CD14-positive monocyte (primary cell): ENCODE measurements at regions of chr17 and their contacts with region 1.

Region 1: GRCh38 chr17:38868817-38869525 is 887 bp upstream of the LASP1 start:
- DNase-seq: peak; percentile 77 to 81 (median 80)
- H3K4me3 ChIP-seq: peak overlapping the region; percentile 98 to 100 (median 100)
- H3K4me3 Mint-ChIP-seq: peak overlapping the region; percentile 95 to 99
- H3K27ac ChIP-seq: peak overlapping the region; percentile 79 to 89
- H3K27ac Mint-ChIP-seq: peak overlapping the region; percentile 92 to 97 (median 95)
- H3K4me1 ChIP-seq: peaks cover 44 to 60% of the 10 kb centered on the region in 2 donors
- H3K4me1 Mint-ChIP-seq: peaks cover 43% of the 10 kb centered on the region
- H3K27me3 ChIP-seq: no peaks in the 10 kb centered on the region
- H3K27me3 Mint-ChIP-seq: peaks cover 0 to 4% (median 2%) of the 10 kb centered on the region in 3 donors
- CTCF ChIP-seq: no peak

Region 2: GRCh38 chr17:38702166-38702899 is 166.6 kb before region 1 on chr17:
- intact Hi-C with region 1: loop called in 1 of 2 experiments (anchors 10 kb)
- DNase-seq: peak; percentile 76 to 81 (median 79)
- H3K4me3 ChIP-seq: peak overlapping the region; percentile 86 to 93 (median 90)
- H3K4me3 Mint-ChIP-seq: peak overlapping the region; percentile 94 to 98
- H3K27ac ChIP-seq: peak overlapping the region; percentile 99 to 100
- H3K27ac Mint-ChIP-seq: peak overlapping the region; percentile 97 to 100 (median 100)
- H3K4me1 ChIP-seq: peaks cover 65 to 66% of the 10 kb centered on the region in 2 donors
- H3K4me1 Mint-ChIP-seq: peaks cover 59% of the 10 kb centered on the region
- H3K27me3 ChIP-seq: peaks cover 0 to 6% of the 10 kb centered on the region in 2 donors
- H3K27me3 Mint-ChIP-seq: peaks cover 18 to 25% (median 20%) of the 10 kb centered on the region in 3 donors
- CTCF ChIP-seq: no peak

Region 3: DNA sequence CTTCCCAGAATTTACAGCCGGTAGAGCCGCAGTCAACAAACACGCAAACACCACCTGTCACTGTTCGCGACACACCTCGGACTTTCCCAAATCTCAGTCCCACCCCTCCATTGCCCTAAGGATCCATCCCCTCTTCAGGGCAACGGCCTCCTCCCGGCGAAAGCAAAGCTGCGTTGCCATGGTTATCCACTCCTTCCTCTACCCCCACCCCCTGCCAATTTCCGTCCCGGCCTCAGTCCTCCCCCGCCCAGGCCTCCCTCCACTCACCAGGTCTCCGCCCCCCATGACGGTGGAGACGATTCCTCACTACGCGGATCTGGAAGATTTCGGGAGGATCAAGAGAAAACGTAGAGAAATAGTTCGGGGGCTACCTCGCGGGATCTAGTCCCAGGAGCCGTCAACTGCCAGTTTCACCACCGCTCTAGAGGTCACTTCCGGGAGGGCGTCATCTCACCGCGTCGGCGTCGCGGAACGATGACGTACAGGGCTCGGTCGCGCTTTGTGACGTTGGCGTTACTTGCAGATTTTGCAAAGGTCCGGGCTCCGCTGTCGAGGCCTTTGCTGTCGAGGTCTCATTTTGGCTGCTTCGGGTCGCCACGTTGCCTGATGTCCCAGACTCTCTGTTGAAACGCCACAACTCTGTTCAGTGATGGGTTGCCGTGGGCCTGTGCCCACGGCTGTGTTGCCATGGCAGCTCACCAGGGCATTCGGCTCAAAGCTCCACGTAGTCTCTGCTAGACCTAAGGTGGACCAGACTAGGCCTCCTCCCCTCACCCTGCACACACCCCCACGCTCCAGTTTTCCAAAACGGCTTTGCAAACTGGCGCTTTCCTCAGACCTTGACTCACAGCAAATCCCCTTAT is 43.8 kb before region 1 on chr17 and contains the start of gene CWC25:
- intact Hi-C with region 1: loop called in 1 of 2 experiments (anchors 2 kb)
- DNase-seq: peak; percentile 95 to 99 (median 97)
- H3K4me3 ChIP-seq: peak within 1 kb of the TSS; percentile 80 to 91 (median 82)
- H3K4me3 Mint-ChIP-seq: peak within 1 kb of the TSS; percentile 98 to 100
- H3K27ac ChIP-seq: peak within 1 kb of the TSS; percentile 98 to 100
- H3K27ac Mint-ChIP-seq: peak within 1 kb of the TSS; percentile 99 to 100 (median 100)
- H3K4me1 ChIP-seq: peaks cover 16 to 19% of the 10 kb centered on the region in 2 donors
- H3K4me1 Mint-ChIP-seq: peaks cover 20% of the 10 kb centered on the region
- H3K27me3 ChIP-seq: no peaks in the 10 kb centered on the region
- H3K27me3 Mint-ChIP-seq: peaks cover 3 to 6% (median 4%) of the 10 kb centered on the region in 3 donors
- CTCF ChIP-seq: no peak
- polyA plus RNA-seq, gene CWC25: 7.5 to 63.2 (median 8.4) TPM

Region 4: DNA sequence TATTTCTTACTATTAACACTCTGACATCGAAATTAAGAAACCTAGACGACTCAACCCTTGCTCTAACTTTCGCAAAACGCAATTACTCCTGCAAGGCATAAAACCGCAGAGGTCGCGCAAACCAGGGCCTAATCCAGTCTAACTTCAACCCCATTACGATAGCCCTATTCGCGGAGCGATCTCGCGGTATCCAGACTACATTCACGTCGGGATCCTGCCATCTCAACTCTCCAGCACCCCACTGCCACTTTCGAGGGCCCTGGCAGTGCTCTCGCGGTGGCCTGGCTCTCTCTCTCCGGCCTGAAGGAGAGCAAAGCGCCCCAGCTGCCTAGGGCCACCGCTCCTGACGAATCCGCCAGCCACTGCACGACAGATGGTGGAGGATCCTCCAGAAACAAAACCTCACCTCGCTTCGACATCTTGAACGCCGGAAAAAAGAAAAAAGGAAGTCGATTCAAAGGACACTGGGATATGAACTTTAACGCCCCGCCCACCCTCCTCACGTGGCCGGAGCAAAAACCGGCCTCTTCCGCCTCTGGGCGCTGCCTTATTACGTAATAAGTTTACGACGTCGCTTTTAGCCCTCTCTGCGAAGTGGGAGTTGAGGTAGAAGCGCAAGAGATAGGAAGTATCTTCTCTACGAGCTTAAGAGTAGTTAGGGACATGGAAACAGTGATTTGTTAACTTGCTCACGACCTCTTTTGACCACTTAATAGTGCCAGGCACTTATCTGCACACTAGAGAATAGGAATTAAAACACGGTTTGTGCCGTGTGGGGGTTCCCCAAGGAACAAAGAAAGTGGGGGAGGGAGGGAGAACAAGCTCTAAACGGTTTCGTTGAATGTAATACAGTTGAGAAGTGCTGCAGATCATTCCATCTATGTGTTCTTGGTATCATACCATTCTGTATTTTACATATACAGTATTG is 15.4 kb before region 1 on chr17 and contains the start of gene RPL23:
- intact Hi-C with region 1: loop called (anchors 2 kb)
- DNase-seq: peak; percentile 98
- H3K4me3 ChIP-seq: peak within 1 kb of the TSS; percentile 87 to 95 (median 90)
- H3K4me3 Mint-ChIP-seq: peak within 1 kb of the TSS; percentile 91 to 96
- H3K27ac ChIP-seq: peak within 1 kb of the TSS; percentile 90 to 94
- H3K27ac Mint-ChIP-seq: peak within 1 kb of the TSS; percentile 98 to 99 (median 99)
- H3K4me1 ChIP-seq: peaks cover 42 to 51% of the 10 kb centered on the region in 2 donors
- H3K4me1 Mint-ChIP-seq: peaks cover 46% of the 10 kb centered on the region
- H3K27me3 ChIP-seq: no peaks in the 10 kb centered on the region
- H3K27me3 Mint-ChIP-seq: peaks cover 0 to 4% (median 2%) of the 10 kb centered on the region in 3 donors
- CTCF ChIP-seq: no peak
- polyA plus RNA-seq, gene RPL23: 561 to 1,701 (median 618) TPM

Region 5: GRCh38 chr17:38912221-38912813 is 43.3 kb after region 1 on chr17:
- intact Hi-C with region 1: loop called in 1 of 2 experiments (anchors 5 kb)
- DNase-seq: no peak
- H3K4me3 ChIP-seq: no peak overlapping the region
- H3K4me3 Mint-ChIP-seq: no peak overlapping the region
- H3K27ac ChIP-seq: peak overlapping the region in 1 of 2 donors; percentile 45
- H3K27ac Mint-ChIP-seq: peak overlapping the region in 3 of 7 donors; percentile 58 to 72 (median 66)
- H3K4me1 ChIP-seq: peaks cover 0 to under 1% of the 10 kb centered on the region in 2 donors
- H3K4me1 Mint-ChIP-seq: peaks cover 2% of the 10 kb centered on the region
- H3K27me3 ChIP-seq: no peaks in the 10 kb centered on the region
- H3K27me3 Mint-ChIP-seq: peaks cover 0 to 4% (median 0%) of the 10 kb centered on the region in 3 donors
- CTCF ChIP-seq: no peak

Region 6: GRCh38 chr17:39153599-39154051 is 284.7 kb after region 1 on chr17:
- intact Hi-C with region 1: loop called in 1 of 2 experiments (anchors 10 kb)
- DNase-seq: peak; percentile 91 to 93 (median 91)
- H3K4me3 ChIP-seq: peak overlapping the region; percentile 55 to 100 (median 82)
- H3K4me3 Mint-ChIP-seq: peak overlapping the region; percentile 99 to 100
- H3K27ac ChIP-seq: peak overlapping the region; percentile 65 to 75
- H3K27ac Mint-ChIP-seq: peak overlapping the region; percentile 79 to 96 (median 94)
- H3K4me1 ChIP-seq: peaks cover 32 to 44% of the 10 kb centered on the region in 2 donors
- H3K4me1 Mint-ChIP-seq: peaks cover 39% of the 10 kb centered on the region
- H3K27me3 ChIP-seq: peaks cover 23 to 36% of the 10 kb centered on the region in 2 donors
- H3K27me3 Mint-ChIP-seq: peaks cover 39 to 43% (median 41%) of the 10 kb centered on the region in 3 donors
- CTCF ChIP-seq: no peak